T-cell (primary cell): ENCODE measurements at regions of chr5 and their contacts with region 1.

Region 1: DNA sequence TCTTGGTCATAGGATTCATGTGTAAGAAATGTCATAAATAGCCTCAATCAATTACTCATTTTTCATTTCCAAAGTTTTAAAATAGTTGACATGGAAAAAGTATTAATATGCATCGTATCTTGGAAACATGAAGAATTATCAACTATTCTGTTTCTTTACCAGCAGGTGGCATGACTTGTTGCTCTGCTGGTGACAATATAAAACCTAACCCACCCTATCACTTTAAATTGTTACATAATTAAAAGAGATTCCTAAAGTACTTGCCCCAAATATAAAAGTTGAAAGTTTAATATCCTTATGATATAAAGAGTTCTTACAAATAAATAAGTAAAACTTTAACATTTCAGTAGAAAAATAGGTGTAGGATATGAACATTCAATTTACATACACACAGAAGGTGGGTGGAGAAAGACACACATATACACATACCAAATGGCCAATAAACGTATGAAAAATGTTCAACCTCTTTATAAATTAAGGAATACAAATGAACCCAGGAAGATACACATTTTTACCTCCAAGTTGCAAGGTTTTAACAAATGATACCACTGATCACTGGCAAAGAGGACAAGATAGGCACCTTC is 30.6 kb downstream of the MAP1B start:
- DNase-seq: peak in 1 of 35 experiments; percentile 40
- ATAC-seq: peak in 1 of 4 experiments; percentile 40
- H3K4me3 ChIP-seq: no peak overlapping the region
- H3K4me3 Mint-ChIP-seq: no peak overlapping the region
- H3K27ac ChIP-seq: no peak overlapping the region
- H3K27ac Mint-ChIP-seq: no peak overlapping the region
- H3K4me1 ChIP-seq: peaks cover 0 to 3% of the 10 kb centered on the region in 2 experiments
- H3K4me1 Mint-ChIP-seq: peaks cover 0 to 8% (median 7%) of the 10 kb centered on the region in 3 donors
- H3K27me3 ChIP-seq: peaks cover 3 to 13% of the 10 kb centered on the region in 2 experiments
- H3K27me3 Mint-ChIP-seq: peaks cover 24 to 46% of the 10 kb centered on the region in 2 donors

Region 2: GRCh38 chr5:72032788-72033187 is 105.1 kb before region 1 on chr5:
- CTCF ChIA-PET with region 1: no interaction called
- POLR2A ChIA-PET with region 1: no interaction called
- DNase-seq: no peak
- ATAC-seq: no peak
- H3K4me3 ChIP-seq: no peak overlapping the region
- H3K4me3 Mint-ChIP-seq: no peak overlapping the region
- H3K27ac ChIP-seq: no peak overlapping the region
- H3K27ac Mint-ChIP-seq: no peak overlapping the region
- H3K4me1 ChIP-seq: no peaks in the 10 kb centered on the region
- H3K4me1 Mint-ChIP-seq: no peaks in the 10 kb centered on the region
- H3K27me3 ChIP-seq: peaks cover 0 to 11% of the 10 kb centered on the region in 2 experiments
- H3K27me3 Mint-ChIP-seq: peaks cover 17 to 28% of the 10 kb centered on the region in 2 donors

Region 3: DNA sequence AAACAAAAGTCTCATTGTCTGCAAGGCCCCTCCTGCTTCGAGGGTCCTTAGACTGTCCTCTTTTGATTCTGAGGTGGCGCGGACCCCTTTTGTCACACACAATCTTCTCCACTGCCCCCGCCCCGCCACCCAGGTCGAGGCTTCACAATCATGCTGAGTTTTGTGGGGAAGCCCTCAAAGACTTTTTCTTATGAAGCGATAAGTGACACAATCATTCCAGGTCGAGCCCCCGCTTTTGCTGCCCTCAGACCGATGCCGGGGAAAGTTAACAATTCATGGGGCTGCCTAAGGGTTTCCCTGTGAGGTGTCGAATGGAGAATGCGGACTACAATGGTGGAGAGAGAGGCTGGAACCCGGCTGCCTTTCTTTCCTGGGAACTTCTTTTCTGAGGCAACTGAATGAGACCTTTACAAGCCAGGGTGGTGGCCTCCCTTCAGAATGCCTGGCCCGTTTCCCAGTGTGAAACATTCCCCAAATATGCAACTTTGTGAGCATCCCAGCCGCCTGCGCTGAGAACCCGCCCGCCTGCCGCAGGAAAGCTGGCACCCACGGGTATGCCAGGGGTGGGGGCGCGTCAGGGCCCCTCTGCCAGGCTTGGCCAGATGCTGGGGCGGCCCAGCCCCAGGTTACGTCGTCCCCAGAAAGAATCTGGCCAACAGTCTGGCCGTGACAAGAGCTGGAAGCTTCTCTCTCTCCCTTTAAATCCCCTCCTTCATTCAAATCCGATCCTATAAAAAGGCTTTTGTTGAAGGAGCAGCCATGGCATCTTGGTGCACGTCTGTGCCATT is 41.3 kb after region 1 on chr5:
- CTCF ChIA-PET with region 1: no interaction called
- POLR2A ChIA-PET with region 1: no interaction called
- DNase-seq: no peak
- ATAC-seq: no peak
- H3K4me3 ChIP-seq: no peak overlapping the region
- H3K4me3 Mint-ChIP-seq: no peak overlapping the region
- H3K27ac ChIP-seq: no peak overlapping the region
- H3K27ac Mint-ChIP-seq: no peak overlapping the region
- H3K4me1 ChIP-seq: no peaks in the 10 kb centered on the region
- H3K4me1 Mint-ChIP-seq: no peaks in the 10 kb centered on the region
- H3K27me3 ChIP-seq: peaks cover 0 to 37% of the 10 kb centered on the region in 2 experiments
- H3K27me3 Mint-ChIP-seq: peaks cover 27 to 43% of the 10 kb centered on the region in 2 donors

Region 4: DNA sequence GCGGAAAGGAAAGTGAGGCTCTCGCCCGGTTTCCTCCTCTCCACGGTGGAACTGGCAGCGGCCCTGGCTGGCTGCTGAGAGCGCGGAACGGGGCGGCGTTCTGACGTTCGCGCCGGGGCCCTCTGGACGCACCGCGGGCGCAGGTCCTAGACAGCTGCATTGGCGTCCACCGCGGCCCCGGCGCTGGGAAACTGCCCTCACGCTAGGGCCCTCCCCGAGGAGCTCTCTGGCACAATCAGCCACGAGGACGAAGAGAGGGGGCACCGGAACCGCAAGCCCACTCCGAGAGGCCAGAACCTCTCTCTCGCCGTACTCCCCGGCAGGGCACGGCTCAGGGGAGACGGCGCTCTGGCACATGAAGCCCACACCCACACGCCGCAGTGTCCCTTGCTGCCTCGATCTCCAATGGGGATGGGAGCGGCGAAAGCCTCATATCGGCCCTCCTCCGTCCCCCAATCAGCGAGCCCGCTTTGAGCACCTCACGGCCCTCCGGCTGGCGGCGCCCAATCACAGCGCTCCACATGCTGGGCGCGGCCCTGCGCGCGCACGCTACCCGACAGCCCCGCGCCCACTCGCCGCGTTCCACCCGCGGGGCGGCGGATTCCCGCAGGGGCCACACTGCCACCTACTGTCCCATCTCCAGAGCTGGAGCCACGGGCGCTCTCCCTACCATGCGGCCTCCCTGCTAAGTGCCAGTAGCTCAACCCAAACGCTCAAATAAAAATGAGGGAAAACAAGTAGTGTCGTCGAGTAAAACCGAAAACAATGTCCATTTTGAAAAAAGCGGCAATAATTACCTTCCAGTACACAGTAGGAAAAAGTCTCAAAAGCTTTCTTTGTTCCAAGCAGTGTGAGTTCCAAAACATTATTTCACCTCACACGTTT is 170.3 kb after region 1 on chr5:
- CTCF ChIA-PET with region 1: interaction called, 8 to 10 read pairs
- POLR2A ChIA-PET with region 1: no interaction called
- DNase-seq: peak; percentile 78 to 98 (median 94)
- ATAC-seq: peak; percentile 96 to 99 (median 98)
- H3K4me3 ChIP-seq: peak overlapping the region; percentile 85 to 88
- H3K4me3 Mint-ChIP-seq: peak overlapping the region; percentile 84 to 91 (median 88)
- H3K27ac ChIP-seq: peak overlapping the region; percentile 89
- H3K27ac Mint-ChIP-seq: peak overlapping the region; percentile 85 to 91
- H3K4me1 ChIP-seq: peaks cover 3 to 14% of the 10 kb centered on the region in 2 experiments
- H3K4me1 Mint-ChIP-seq: peaks cover 27 to 36% (median 35%) of the 10 kb centered on the region in 3 donors
- H3K27me3 ChIP-seq: no peaks in the 10 kb centered on the region
- H3K27me3 Mint-ChIP-seq: no peaks in the 10 kb centered on the region